B cell (primary cell): ENCODE measurements at regions of chr1 and their contacts with region 1.

Region 1: GRCh38 chr1:92858564-92859399 is 26.9 kb downstream of the RPL5 start:
- DNase-seq: peak; percentile 87
- ATAC-seq: peak; percentile 98
- H3K4me3 ChIP-seq: no peak overlapping the region
- H3K4me3 Mint-ChIP-seq: peak overlapping the region; percentile 2
- H3K27ac ChIP-seq: peak overlapping the region in 1 of 2 donors; percentile 38
- H3K27ac Mint-ChIP-seq: peak overlapping the region; percentile 0
- H3K4me1 ChIP-seq: peaks cover 0 to 4% of the 10 kb centered on the region in 2 donors
- H3K4me1 Mint-ChIP-seq: peaks cover 13% of the 10 kb centered on the region
- H3K27me3 ChIP-seq: no peaks in the 10 kb centered on the region
- H3K27me3 Mint-ChIP-seq: no peaks in the 10 kb centered on the region
- CTCF ChIP-seq: peak; percentile 99

Region 2: DNA sequence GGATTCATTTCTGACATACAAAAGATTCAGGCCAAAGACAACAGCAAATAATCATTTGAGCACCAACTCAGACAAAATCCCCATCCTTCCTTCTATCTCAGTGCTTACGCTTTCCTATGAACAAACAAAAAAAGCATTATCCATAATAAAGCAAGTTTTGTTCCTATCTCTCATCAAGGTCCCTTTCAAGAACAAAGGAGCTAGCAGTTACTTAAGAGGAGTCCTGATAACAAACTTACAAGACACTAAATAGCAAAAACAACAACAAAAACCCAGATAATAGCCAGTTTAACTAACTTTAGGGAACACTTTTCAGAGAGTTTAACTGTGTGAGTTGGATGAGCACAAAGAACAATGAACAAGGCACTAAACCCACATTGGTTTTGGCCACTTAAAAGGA is 84.4 kb before region 1 on chr1:
- CTCF ChIA-PET with region 1: no interaction called
- POLR2A ChIA-PET with region 1: no interaction called
- intact Hi-C with region 1: no loop called
- DNase-seq: no peak
- ATAC-seq: no peak
- H3K4me3 ChIP-seq: no peak overlapping the region
- H3K4me3 Mint-ChIP-seq: no peak overlapping the region
- H3K27ac ChIP-seq: no peak overlapping the region
- H3K27ac Mint-ChIP-seq: no peak overlapping the region
- H3K4me1 ChIP-seq: no peaks in the 10 kb centered on the region
- H3K4me1 Mint-ChIP-seq: peaks cover 12% of the 10 kb centered on the region
- H3K27me3 ChIP-seq: no peaks in the 10 kb centered on the region
- H3K27me3 Mint-ChIP-seq: no peaks in the 10 kb centered on the region
- CTCF ChIP-seq: no peak

Region 3: GRCh38 chr1:92872719-92873118 is 13.9 kb after region 1 on chr1:
- CTCF ChIA-PET with region 1: interaction called, 11 read pairs
- POLR2A ChIA-PET with region 1: no interaction called
- intact Hi-C with region 1: no loop called
- DNase-seq: no peak
- ATAC-seq: no peak
- H3K4me3 ChIP-seq: no peak overlapping the region
- H3K4me3 Mint-ChIP-seq: no peak overlapping the region
- H3K27ac ChIP-seq: no peak overlapping the region
- H3K27ac Mint-ChIP-seq: no peak overlapping the region
- H3K4me1 ChIP-seq: peaks cover 4 to 9% of the 10 kb centered on the region in 2 donors
- H3K4me1 Mint-ChIP-seq: peaks cover 14% of the 10 kb centered on the region
- H3K27me3 ChIP-seq: no peaks in the 10 kb centered on the region
- H3K27me3 Mint-ChIP-seq: no peaks in the 10 kb centered on the region
- CTCF ChIP-seq: no peak

Region 4: GRCh38 chr1:92910081-92910480 is 51.3 kb after region 1 on chr1:
- CTCF ChIA-PET with region 1: interaction called, 11 read pairs
- POLR2A ChIA-PET with region 1: no interaction called
- intact Hi-C with region 1: no loop called
- DNase-seq: no peak
- ATAC-seq: no peak
- H3K4me3 ChIP-seq: no peak overlapping the region
- H3K4me3 Mint-ChIP-seq: no peak overlapping the region
- H3K27ac ChIP-seq: no peak overlapping the region
- H3K27ac Mint-ChIP-seq: no peak overlapping the region
- H3K4me1 ChIP-seq: peaks cover 10 to 16% of the 10 kb centered on the region in 2 donors
- H3K4me1 Mint-ChIP-seq: peaks cover 50% of the 10 kb centered on the region
- H3K27me3 ChIP-seq: no peaks in the 10 kb centered on the region
- H3K27me3 Mint-ChIP-seq: no peaks in the 10 kb centered on the region
- CTCF ChIP-seq: no peak

Region 5: GRCh38 chr1:92968138-92969032 is 109.6 kb after region 1 on chr1:
- CTCF ChIA-PET with region 1: interaction called, 200 read pairs
- POLR2A ChIA-PET with region 1: no interaction called
- intact Hi-C with region 1: no loop called
- DNase-seq: peak; percentile 58
- ATAC-seq: peak; percentile 68
- H3K4me3 ChIP-seq: no peak overlapping the region
- H3K4me3 Mint-ChIP-seq: no peak overlapping the region
- H3K27ac ChIP-seq: no peak overlapping the region
- H3K27ac Mint-ChIP-seq: peak overlapping the region; percentile 29
- H3K4me1 ChIP-seq: peaks cover 50 to 60% of the 10 kb centered on the region in 2 donors
- H3K4me1 Mint-ChIP-seq: peaks cover 38% of the 10 kb centered on the region
- H3K27me3 ChIP-seq: no peaks in the 10 kb centered on the region
- H3K27me3 Mint-ChIP-seq: no peaks in the 10 kb centered on the region
- CTCF ChIP-seq: peak; percentile 70

Region 6: DNA sequence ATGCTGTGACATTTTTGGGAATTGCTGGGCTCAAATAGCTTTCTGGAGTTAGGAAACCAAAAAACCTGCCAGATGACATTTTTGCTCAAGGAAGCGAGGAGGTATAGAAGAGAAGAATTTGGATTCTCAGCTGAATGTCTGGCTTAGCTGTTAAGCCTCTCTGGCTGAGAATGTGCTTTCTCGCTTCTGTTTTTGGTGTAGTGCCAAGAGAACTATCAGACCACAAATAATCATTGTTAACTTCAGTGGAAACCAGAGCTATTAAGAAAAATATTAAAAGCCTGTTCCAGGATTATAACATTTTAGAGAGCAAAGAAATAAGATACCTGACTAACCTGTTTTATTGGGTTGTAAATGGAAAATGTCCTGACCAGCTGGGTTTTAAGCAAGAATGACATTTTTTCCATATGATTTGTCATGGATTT is 142.0 kb after region 1 on chr1:
- CTCF ChIA-PET with region 1: interaction called, 14 read pairs
- POLR2A ChIA-PET with region 1: no interaction called
- intact Hi-C with region 1: no loop called
- DNase-seq: no peak
- ATAC-seq: no peak
- H3K4me3 ChIP-seq: no peak overlapping the region
- H3K4me3 Mint-ChIP-seq: no peak overlapping the region
- H3K27ac ChIP-seq: no peak overlapping the region
- H3K27ac Mint-ChIP-seq: no peak overlapping the region
- H3K4me1 ChIP-seq: peaks cover 12 to 13% of the 10 kb centered on the region in 2 donors
- H3K4me1 Mint-ChIP-seq: peaks cover 14% of the 10 kb centered on the region
- H3K27me3 ChIP-seq: no peaks in the 10 kb centered on the region
- H3K27me3 Mint-ChIP-seq: no peaks in the 10 kb centered on the region
- CTCF ChIP-seq: no peak

Region 7: DNA sequence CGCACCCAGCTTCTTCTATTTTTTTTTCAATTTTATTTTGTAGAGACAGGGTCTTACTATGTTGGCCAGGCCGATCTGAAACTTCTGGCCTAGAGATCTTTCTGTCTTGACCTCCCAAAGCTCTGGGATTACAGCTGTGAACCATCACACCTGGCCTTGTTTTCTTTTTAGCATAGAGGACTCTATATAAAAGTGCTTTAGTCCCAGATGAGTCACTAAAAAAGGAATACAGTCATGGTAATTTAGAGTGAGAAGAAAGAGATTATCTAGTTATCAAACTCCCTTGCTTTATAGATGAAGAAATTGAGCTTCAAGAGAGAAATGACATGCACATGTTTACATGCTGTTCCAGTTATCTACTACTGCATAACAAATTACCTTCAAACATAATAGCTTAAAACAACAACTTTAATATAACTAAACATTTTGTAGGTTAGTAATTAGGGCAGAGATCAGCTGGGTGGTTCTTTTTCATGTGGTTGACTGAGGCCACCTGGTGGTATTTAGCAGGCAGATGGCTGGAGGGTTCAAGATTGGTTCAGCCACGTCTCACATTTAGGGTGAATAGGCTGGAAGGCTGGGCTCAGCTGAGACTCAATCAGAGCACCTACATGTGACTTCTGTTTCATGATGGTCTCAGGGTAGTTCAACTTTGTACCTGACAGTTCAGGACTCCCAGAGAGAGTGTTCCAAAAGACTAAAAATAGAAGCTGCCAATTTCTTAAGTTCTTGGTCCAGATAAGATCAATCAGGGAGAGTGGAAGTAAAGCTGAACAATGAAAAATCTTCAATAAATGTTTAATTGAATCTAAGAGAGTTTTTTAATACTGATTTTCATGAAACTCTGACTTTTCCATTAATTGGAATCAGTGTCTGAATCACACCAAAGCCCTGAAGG is 203.4 kb after region 1 on chr1:
- CTCF ChIA-PET with region 1: interaction called, 18 read pairs
- POLR2A ChIA-PET with region 1: no interaction called
- intact Hi-C with region 1: loop called (anchors 1 kb)
- DNase-seq: peak; percentile 68
- ATAC-seq: peak; percentile 69
- H3K4me3 ChIP-seq: no peak overlapping the region
- H3K4me3 Mint-ChIP-seq: no peak overlapping the region
- H3K27ac ChIP-seq: no peak overlapping the region
- H3K27ac Mint-ChIP-seq: no peak overlapping the region
- H3K4me1 ChIP-seq: no peaks in the 10 kb centered on the region
- H3K4me1 Mint-ChIP-seq: no peaks in the 10 kb centered on the region
- H3K27me3 ChIP-seq: peaks cover 0 to 5% (median 0%) of the 10 kb centered on the region in 4 experiments
- H3K27me3 Mint-ChIP-seq: peaks cover 24% of the 10 kb centered on the region
- CTCF ChIP-seq: peak; percentile 68

Region 8: DNA sequence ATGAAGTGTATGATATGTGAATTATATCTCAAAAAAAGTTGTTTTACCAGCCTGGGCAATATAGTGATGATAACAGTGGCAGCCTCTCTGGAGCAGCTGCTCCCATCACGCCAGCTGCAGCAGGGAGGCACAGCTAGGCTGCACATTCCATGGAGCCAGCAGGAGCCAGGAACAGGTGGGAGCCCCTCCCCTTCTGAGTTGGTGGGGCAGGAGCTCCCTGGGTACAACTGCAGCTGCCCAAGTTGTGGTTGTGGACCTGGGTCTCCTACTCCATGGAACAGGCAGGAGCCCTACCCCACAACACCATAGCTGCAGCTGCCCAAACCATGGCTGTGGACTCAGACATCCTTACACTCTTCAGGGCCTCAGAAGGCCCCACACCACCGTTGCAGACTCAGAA is 567.4 kb after region 1 on chr1:
- CTCF ChIA-PET with region 1: no interaction called
- POLR2A ChIA-PET with region 1: no interaction called
- intact Hi-C with region 1: no loop called
- DNase-seq: no peak
- ATAC-seq: no peak
- H3K4me3 ChIP-seq: no peak overlapping the region
- H3K4me3 Mint-ChIP-seq: no peak overlapping the region
- H3K27ac ChIP-seq: no peak overlapping the region
- H3K27ac Mint-ChIP-seq: no peak overlapping the region
- H3K4me1 ChIP-seq: no peaks in the 10 kb centered on the region
- H3K4me1 Mint-ChIP-seq: no peaks in the 10 kb centered on the region
- H3K27me3 ChIP-seq: peaks cover 0 to 2% (median 0%) of the 10 kb centered on the region in 4 experiments
- H3K27me3 Mint-ChIP-seq: peaks cover 4% of the 10 kb centered on the region
- CTCF ChIP-seq: no peak